ENCODE measurements at regions of chr11 and their contacts with region 1.

Region 1: DNA sequence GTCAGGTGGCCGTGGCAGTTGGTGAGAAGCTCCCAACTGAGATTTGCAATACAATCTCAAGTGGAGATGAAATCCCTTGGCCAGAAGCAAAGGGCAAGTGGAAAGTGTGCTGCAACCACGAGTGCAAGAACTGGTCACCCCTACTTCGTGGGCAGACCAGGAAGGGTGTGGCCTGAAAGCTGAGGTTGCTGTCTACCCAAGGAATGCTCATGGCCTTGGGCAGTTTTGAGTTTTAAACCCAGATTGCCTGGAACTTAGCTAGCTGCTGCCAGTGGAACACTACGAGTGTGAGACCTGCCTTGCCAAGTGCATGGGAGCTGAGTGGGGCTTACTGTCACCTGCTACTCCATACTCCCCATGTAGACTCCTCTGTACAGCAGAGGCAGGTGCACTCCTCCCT is 113.3 kb upstream of the FAT3 start:
- DNase-seq: no peak
- ATAC-seq: no peak
- H3K4me3 Mint-ChIP-seq: no peak overlapping the region
- H3K27ac Mint-ChIP-seq: no peak overlapping the region
- H3K4me1 Mint-ChIP-seq: no peaks in the 10 kb centered on the region
- H3K27me3 Mint-ChIP-seq: no peaks in the 10 kb centered on the region

Region 2: DNA sequence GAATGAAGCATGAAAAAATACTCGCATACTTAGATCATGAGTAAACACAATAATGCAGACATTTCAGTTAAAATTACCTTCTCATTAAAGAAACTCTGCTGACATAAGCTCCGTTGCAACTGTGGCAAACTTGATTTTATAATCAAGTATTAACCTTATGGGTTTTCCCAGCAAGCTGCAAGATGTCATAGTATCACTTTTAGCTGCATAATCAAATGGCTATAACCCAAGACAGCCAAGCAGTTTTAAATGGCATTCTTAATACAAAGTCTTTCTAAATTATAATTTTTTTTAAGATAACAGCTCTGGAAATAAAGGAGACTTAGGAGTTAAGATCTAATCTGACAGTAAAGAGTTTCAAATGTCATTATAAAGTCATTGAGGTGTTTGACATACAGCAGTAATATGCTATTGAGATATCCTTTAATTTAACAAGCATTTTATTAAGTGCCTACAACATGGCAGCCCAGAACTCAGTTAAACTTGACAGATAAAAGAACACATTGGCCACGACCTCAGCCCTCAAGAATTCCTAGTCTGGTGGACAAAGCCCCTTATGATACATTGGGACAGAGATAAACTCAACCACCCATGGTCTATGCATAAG is 49.7 kb before region 1 on chr11:
- CTCF ChIA-PET with region 1: no interaction called
- POLR2A ChIA-PET with region 1: no interaction called
- intact Hi-C with region 1: loop called in 1 of 2 experiments (anchors 5 kb)
- DNase-seq: no peak
- ATAC-seq: no peak
- H3K4me3 Mint-ChIP-seq: no peak overlapping the region
- H3K27ac Mint-ChIP-seq: no peak overlapping the region
- H3K4me1 Mint-ChIP-seq: no peaks in the 10 kb centered on the region
- H3K27me3 Mint-ChIP-seq: no peaks in the 10 kb centered on the region

Region 3: GRCh38 chr11:92180226-92180625 is 68.9 kb after region 1 on chr11:
- CTCF ChIA-PET with region 1: no interaction called
- POLR2A ChIA-PET with region 1: no interaction called
- intact Hi-C with region 1: no loop called
- DNase-seq: no peak
- ATAC-seq: no peak
- H3K4me3 Mint-ChIP-seq: no peak overlapping the region
- H3K27ac Mint-ChIP-seq: no peak overlapping the region
- H3K4me1 Mint-ChIP-seq: no peaks in the 10 kb centered on the region
- H3K27me3 Mint-ChIP-seq: no peaks in the 10 kb centered on the region